ENCODE measurements at regions of chr11 and their contacts with region 1.

Region 1: DNA sequence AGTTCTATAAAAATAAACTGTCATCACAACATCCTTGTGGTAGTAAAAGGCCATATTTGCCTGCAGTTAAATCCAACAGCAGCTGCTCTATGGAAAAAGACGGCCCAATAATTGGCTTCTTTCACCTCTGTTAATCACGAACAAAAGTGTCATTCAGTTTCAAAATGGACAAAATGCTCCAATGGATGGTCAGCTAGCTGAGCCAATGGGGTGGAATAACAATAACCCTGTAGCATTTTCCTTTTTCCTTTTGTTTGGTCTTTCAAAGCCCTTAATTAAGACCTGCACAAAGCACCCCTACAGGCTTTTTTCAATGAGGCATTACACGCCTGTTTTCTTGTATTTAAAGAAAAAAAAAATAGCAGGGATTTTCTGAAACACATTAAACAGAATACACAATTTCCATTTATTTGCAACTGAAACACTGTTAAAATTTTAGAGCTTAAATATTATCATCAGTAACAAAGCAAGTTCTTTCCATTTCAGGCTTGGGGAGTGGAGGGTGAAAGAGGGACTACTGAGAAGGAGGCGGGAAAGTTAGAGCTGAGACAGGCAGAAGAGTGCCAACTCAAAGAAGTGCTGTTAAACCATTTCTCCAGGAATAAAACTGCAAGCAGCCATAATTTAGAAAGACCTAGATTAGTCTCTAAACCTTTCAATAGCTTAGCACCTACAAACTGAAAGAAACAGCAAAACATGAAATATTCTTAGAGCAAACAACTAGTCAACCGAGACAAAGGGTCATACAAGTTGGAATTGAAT is 28.7 kb downstream of the LGR4 start:
- DNase-seq: no peak
- H3K4me3 ChIP-seq: peak overlapping the region in 1 of 4 experiments; percentile 48; a peak in 2 of 8 replicates
- H3K27ac ChIP-seq: peak overlapping the region; percentile 34; the same call in 1 of the 2 replicates
- H3K4me1 ChIP-seq: peaks cover 14 to 35% (median 26%) of the 10 kb centered on the region in 4 experiments; a peak in 6 of 7 replicates
- H3K27me3 ChIP-seq: no peaks in the 10 kb centered on the region
- CTCF ChIP-seq: no peak
- EP300 ChIP-seq: no peak; a peak in 1 of 3 replicates
- POLR2A ChIP-seq: no peak
- RAD21 ChIP-seq: no peak

Region 2: DNA sequence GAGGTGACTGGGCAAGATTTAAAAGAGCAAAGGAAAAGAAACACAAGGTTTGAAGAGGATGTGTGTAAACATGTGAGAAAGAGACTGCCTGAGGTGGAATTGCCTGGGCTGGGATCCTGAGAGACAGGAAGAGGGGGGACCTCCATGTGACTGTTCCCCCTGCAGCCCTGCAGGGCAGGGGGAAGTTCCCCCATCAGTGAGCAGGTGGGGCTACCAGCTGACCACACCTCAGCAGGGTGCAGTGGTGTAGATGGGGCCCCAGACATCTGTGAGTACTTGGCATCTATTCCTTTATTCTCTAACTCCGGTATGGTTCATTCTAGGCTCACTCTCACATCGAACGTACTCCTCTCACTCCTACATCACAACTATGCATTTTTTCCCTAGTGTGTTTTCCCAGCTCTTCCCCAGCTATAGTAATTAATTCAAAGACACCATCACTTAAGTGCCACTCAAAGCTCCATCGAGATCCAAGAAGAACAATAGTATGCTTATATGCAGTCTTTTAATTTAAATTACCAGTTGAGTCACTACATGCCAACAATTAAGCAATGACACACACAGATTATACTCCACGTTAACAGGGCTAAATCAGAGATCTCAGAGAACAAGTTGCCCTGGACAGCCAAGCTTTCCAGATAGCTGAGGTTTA is 14.0 kb before region 1 on chr11:
- CTCF ChIA-PET with region 1: interaction called, 11 read pairs
- POLR2A ChIA-PET with region 1: interaction called, 8 read pairs
- DNase-seq: no peak
- H3K4me3 ChIP-seq: no peak overlapping the region
- H3K27ac ChIP-seq: no peak overlapping the region
- H3K4me1 ChIP-seq: peaks cover 0 to 18% (median 9%) of the 10 kb centered on the region in 4 experiments; a peak in 5 of 7 replicates
- H3K27me3 ChIP-seq: no peaks in the 10 kb centered on the region
- CTCF ChIP-seq: no peak
- EP300 ChIP-seq: no peak
- POLR2A ChIP-seq: no peak
- RAD21 ChIP-seq: no peak

Region 3: GRCh38 chr11:27456140-27456794 is 12.3 kb after region 1 on chr11:
- CTCF ChIA-PET with region 1: interaction called, 5 read pairs
- POLR2A ChIA-PET with region 1: interaction called, 23 read pairs
- DNase-seq: no peak
- H3K4me3 ChIP-seq: no peak overlapping the region
- H3K27ac ChIP-seq: no peak overlapping the region
- H3K4me1 ChIP-seq: peaks cover 0 to 23% (median 11%) of the 10 kb centered on the region in 4 experiments; a peak in 3 of 7 replicates
- H3K27me3 ChIP-seq: no peaks in the 10 kb centered on the region
- CTCF ChIP-seq: no peak
- EP300 ChIP-seq: no peak
- POLR2A ChIP-seq: no peak
- RAD21 ChIP-seq: no peak

Region 4: DNA sequence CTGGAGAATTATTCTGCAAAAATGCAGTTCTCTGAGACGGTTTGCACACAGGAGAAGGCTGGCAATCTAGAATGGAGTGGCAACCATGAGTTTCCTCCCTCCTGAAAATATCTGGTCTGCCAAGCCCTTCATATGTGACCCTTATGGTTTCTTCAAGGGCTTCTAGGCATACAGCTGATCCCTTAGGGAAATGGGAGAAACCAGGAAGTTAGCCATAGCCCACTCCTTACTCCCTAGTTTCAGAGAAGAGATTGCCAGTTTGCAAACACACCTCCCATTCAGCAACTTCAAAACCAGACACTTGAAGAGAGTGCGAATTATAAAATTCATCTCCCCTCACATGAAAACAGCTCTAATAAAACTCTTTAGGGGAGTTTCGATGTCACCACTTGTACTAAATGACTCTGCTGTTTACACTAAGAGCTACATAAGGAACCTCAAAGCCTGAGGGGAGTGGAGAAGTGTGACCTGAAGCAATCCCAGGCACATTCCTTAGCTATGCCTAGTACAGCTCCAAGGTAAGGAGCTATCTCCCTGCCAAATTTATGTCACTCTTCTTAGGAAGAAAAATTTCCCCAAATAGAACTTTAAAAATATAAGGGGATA is 20.3 kb after region 1 on chr11:
- CTCF ChIA-PET with region 1: interaction called, 5 read pairs
- POLR2A ChIA-PET with region 1: interaction called, 10 read pairs
- DNase-seq: no peak
- H3K4me3 ChIP-seq: no peak overlapping the region
- H3K27ac ChIP-seq: no peak overlapping the region
- H3K4me1 ChIP-seq: peaks cover 0 to 26% (median 16%) of the 10 kb centered on the region in 4 experiments; a peak in 6 of 7 replicates
- H3K27me3 ChIP-seq: no peaks in the 10 kb centered on the region
- CTCF ChIP-seq: no peak
- EP300 ChIP-seq: no peak
- POLR2A ChIP-seq: no peak
- RAD21 ChIP-seq: no peak

Region 5: DNA sequence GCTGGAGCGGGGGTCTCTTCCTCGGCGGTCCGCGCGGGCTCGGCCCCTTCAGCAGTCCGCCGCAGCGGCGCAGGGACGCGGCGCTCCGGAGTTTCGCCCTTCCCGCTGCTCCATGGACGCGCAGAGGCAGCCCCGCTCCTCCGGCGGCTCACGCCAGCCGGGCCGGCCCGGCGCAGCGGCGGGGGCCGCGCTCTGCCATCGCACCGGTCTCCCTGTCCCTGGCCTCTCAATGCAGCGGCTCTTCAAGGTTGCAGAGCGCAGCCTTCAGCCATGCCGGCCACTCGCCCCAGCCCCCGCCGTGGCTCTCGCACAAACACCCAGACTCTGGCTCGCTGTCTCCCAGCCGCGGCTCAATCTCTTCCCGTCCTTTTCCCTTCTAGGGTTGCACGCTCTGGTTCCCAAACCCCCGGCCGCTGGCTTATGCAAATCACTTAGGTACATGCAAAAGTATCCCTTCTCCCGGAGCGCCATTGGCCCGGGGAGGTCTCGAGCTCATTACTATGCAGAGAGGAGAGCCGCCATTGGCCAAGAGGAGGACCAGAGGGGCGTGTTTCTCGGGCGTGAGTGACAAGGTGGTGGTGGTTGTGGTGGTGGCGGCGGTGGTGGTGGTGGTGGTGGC is 28.6 kb after region 1 on chr11 and contains the start of gene LGR4:
- CTCF ChIA-PET with region 1: no interaction called
- POLR2A ChIA-PET with region 1: interaction called, 19 read pairs
- DNase-seq: peak; percentile 91 to 97
- H3K4me3 ChIP-seq: peak within 1 kb of the TSS; percentile 80 to 94 (median 86)
- H3K27ac ChIP-seq: peak within 1 kb of the TSS; percentile 84
- H3K4me1 ChIP-seq: peaks cover 0 to 14% (median 5%) of the 10 kb centered on the region in 4 experiments; a peak in 5 of 7 replicates
- H3K27me3 ChIP-seq: no peaks in the 10 kb centered on the region; a peak in 1 of 7 replicates
- CTCF ChIP-seq: no peak
- EP300 ChIP-seq: no peak
- POLR2A ChIP-seq: peak; percentile 73 to 80
- RAD21 ChIP-seq: no peak
- total RNA-seq, gene LGR4: 57.6 and 61.7 TPM in 2 replicates